Endothelial cell of umbilical vein (primary cell): ENCODE measurements at regions of chr3 and their contacts with region 1.

Region 1: DNA sequence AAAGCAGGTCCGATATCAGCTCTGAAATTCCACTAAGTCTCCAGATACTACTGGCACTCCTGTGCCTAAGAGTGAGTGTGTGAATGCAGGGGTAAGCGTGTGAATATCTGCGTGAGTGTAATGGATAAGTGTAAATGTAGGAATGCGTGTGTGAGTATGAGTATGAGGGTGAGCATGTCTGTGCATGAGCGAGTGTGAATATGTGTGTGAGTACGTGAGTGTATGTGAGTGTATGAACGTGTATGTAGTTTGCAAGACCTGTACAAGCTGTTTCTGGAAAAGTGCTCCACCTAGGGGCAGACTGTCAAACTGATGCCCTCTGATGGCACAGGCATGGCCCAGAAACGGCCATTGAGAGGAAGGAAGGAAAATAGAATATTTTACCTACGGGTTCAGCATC is 24.4 kb upstream of the FRMD4B start:
- DNase-seq: peak; percentile 89
- H3K4me3 ChIP-seq: no peak overlapping the region
- H3K27ac ChIP-seq: no peak overlapping the region
- H3K4me1 ChIP-seq: peaks cover 27% of the 10 kb centered on the region
- H3K27me3 ChIP-seq: no peaks in the 10 kb centered on the region
- CTCF ChIP-seq: peak; percentile 83 to 90
- POLR2A ChIP-seq: no peak

Region 2: DNA sequence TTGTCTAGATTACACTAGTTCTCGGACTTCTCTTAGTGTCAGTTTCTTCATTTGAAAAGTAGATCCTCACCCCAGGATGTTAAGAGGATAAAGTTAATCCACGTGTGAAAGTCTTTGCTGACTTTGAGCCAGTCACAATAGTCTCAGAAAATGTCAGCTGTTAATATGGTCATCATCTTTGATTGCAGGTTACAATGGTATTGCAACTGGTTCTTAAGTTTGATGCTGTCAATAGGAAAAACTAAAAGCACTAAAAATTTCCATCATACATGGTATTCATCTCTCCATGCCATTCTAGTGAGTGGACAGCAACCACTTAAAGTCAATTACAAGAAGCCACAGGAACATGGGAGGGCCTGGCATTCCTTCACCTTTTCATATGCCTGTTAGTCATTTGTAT is 670.2 kb before region 1 on chr3:
- CTCF ChIA-PET with region 1: no interaction called
- POLR2A ChIA-PET with region 1: no interaction called
- dilution Hi-C with region 1: no loop called
- intact Hi-C with region 1: no loop called
- DNase-seq: no peak
- H3K4me3 ChIP-seq: no peak overlapping the region
- H3K27ac ChIP-seq: no peak overlapping the region
- H3K4me1 ChIP-seq: no peaks in the 10 kb centered on the region
- H3K27me3 ChIP-seq: no peaks in the 10 kb centered on the region
- CTCF ChIP-seq: no peak
- POLR2A ChIP-seq: no peak

Region 3: DNA sequence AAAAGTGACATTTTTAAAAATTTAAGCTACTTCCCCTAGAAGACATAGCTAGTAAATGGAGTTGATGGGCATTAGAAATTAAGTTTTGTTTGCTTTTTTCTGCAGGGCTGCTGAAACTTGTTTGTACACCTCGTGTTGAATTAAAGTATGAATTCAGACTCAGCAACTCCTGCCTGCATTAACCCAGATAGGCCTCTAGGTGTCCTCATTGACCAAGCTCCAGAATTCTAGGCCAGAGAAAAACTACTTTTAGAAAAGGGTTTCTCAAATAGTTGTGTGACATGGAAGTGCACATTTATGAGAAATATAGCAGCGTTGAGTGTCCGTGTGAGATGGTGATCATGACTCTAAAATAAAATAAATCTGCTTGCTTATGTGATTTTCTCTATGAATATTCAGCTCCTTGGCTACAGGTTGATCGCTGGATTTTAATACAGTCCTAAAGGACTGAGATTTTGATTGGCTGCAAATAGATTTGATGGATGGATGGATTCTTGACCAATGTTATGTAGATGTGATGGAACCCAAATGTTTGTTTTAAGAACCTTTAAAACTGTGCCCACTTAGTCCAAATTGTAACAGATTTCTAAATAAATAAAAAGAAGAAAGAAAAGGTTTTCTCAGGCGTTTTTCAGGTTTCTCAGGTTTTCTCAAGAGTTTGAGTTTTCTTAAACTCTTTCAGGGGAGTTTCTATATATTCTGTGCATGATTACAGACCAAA is 248.5 kb before region 1 on chr3:
- CTCF ChIA-PET with region 1: interaction called, 36 read pairs
- POLR2A ChIA-PET with region 1: no interaction called
- dilution Hi-C with region 1: loop called (anchors 25 kb)
- intact Hi-C with region 1: loop called (anchors 1 kb)
- DNase-seq: peak; percentile 65
- H3K4me3 ChIP-seq: no peak overlapping the region
- H3K27ac ChIP-seq: no peak overlapping the region
- H3K4me1 ChIP-seq: no peaks in the 10 kb centered on the region
- H3K27me3 ChIP-seq: peaks cover 0 to 1% of the 10 kb centered on the region in 2 experiments
- CTCF ChIP-seq: peak; percentile 75
- POLR2A ChIP-seq: no peak

Region 4: GRCh38 chr3:69294014-69294775 is 116.1 kb before region 1 on chr3:
- CTCF ChIA-PET with region 1: interaction called, 11 read pairs
- POLR2A ChIA-PET with region 1: no interaction called
- dilution Hi-C with region 1: no loop called
- intact Hi-C with region 1: loop called (anchors 1 kb)
- DNase-seq: no peak
- H3K4me3 ChIP-seq: no peak overlapping the region
- H3K27ac ChIP-seq: no peak overlapping the region
- H3K4me1 ChIP-seq: peaks cover 20% of the 10 kb centered on the region
- H3K27me3 ChIP-seq: no peaks in the 10 kb centered on the region
- CTCF ChIP-seq: no peak
- POLR2A ChIP-seq: no peak

Region 5: DNA sequence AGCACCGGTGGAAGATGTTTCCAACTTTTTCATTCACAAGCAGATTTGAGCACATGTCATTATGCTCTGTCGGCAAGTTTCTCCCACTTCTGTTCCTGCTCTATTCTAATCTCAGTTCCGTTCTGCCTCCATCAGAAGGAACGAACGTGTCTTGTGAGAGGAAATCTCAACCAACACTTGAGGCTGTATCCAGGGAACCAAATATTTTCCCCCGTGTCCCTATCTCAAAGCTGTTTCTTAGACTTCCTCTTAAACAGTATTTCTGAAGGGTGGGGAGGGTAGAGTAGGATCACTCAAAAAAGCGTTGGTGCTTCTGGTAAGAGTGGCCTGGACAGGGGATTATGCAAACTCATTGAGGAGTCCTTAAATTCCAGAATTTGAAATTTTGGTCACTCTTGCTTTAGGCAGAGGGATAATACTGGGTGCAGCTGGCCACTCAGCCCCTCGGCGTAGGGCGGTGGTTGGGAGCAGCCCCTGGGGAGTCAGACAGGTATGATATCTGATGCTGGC is 79.3 kb before region 1 on chr3:
- CTCF ChIA-PET with region 1: interaction called, 20 read pairs
- POLR2A ChIA-PET with region 1: no interaction called
- dilution Hi-C with region 1: no loop called
- intact Hi-C with region 1: loop called (anchors 2 kb)
- DNase-seq: peak; percentile 84
- H3K4me3 ChIP-seq: no peak overlapping the region
- H3K27ac ChIP-seq: peak overlapping the region; percentile 33
- H3K4me1 ChIP-seq: peaks cover 33% of the 10 kb centered on the region
- H3K27me3 ChIP-seq: no peaks in the 10 kb centered on the region
- CTCF ChIP-seq: no peak
- POLR2A ChIP-seq: no peak

Region 6: GRCh38 chr3:69368129-69368741 is 42.0 kb before region 1 on chr3:
- CTCF ChIA-PET with region 1: interaction called, 18 read pairs
- POLR2A ChIA-PET with region 1: no interaction called
- dilution Hi-C with region 1: no loop called
- intact Hi-C with region 1: loop called (anchors 5 kb)
- DNase-seq: peak; percentile 25
- H3K4me3 ChIP-seq: no peak overlapping the region
- H3K27ac ChIP-seq: no peak overlapping the region
- H3K4me1 ChIP-seq: peaks cover 31% of the 10 kb centered on the region
- H3K27me3 ChIP-seq: no peaks in the 10 kb centered on the region
- CTCF ChIP-seq: no peak
- POLR2A ChIP-seq: no peak

Region 7: DNA sequence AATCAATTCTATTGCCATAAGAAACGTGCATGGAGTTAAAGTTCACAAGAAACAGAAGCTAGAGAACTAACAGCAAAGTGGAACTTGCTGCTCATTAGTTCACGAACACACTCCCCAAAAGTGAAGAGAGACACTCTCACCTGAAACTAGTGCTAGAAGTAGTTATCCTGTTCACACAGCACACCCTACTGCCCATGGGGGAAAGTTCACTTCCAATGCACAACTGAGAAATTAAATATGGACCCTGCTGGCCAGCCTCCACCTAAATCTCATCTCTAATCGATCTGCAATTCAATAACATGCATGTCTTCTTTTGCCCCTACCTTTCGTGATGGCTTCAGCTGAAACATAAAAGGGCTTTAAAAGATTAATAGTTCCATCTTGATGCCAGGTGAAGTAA is 15.0 kb after region 1 on chr3:
- CTCF ChIA-PET with region 1: interaction called, 52 read pairs
- POLR2A ChIA-PET with region 1: no interaction called
- dilution Hi-C with region 1: no loop called
- intact Hi-C with region 1: loop called (anchors 1 kb)
- DNase-seq: peak; percentile 69
- H3K4me3 ChIP-seq: no peak overlapping the region
- H3K27ac ChIP-seq: no peak overlapping the region
- H3K4me1 ChIP-seq: peaks cover 15% of the 10 kb centered on the region
- H3K27me3 ChIP-seq: no peaks in the 10 kb centered on the region
- CTCF ChIP-seq: peak; percentile 71 to 74
- POLR2A ChIP-seq: no peak